HCT116 (cell line): ENCODE measurements at regions of chr10 and their contacts with region 1.

Region 1: DNA sequence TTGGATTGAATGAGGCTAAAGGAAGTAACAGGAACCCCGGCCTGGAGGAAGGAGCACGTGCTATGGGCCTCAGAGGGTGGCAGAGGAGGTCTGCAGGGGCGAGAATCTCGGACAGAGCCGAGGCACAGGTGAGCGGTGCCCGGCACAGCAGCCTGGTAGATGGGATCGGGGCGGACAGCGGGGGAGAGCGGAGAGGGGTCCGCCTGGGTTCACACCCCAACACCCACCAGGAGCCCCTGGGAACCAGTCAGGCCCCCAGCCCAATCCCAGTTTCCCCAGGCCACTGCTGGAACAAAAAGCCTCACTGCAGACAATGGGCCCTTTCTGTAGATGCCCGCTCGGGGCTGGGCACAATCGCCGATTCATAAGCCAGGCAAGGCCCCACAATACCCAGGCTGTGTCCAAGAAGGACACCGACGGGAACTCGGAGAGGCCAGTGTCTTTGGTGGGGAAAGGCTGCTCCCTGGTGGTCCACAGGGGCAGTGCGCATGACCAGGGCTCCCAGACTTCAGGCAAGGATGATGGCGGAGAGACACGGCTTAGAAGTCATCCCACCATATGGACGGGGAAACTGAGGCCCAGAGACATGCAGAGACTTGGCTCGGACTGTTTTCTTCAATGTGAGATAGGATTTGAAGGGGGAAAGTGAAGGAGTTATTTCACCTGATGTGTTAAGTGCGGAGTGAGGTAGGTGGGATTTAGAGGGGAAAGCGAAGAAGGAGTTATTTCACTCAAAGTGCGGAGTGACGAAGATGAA is 106.9 kb upstream of the GPR26 start:
- DNase-seq: peak; percentile 60
- ATAC-seq: peak; percentile 97
- H3K4me3 ChIP-seq: no peak overlapping the region
- H3K27ac ChIP-seq: no peak overlapping the region
- H3K4me1 ChIP-seq: 0 out of 4 replicates have a peak, but pooled peaks cover 0 to 3% of the 10 kb centered on the region in 2 experiments
- H3K27me3 ChIP-seq: no peaks in the 10 kb centered on the region
- CTCF ChIP-seq: peak; percentile 95 to 100 (median 100)
- POLR2A ChIP-seq: no peak
- RAD21 ChIP-seq: peak; percentile 99

Region 2: DNA sequence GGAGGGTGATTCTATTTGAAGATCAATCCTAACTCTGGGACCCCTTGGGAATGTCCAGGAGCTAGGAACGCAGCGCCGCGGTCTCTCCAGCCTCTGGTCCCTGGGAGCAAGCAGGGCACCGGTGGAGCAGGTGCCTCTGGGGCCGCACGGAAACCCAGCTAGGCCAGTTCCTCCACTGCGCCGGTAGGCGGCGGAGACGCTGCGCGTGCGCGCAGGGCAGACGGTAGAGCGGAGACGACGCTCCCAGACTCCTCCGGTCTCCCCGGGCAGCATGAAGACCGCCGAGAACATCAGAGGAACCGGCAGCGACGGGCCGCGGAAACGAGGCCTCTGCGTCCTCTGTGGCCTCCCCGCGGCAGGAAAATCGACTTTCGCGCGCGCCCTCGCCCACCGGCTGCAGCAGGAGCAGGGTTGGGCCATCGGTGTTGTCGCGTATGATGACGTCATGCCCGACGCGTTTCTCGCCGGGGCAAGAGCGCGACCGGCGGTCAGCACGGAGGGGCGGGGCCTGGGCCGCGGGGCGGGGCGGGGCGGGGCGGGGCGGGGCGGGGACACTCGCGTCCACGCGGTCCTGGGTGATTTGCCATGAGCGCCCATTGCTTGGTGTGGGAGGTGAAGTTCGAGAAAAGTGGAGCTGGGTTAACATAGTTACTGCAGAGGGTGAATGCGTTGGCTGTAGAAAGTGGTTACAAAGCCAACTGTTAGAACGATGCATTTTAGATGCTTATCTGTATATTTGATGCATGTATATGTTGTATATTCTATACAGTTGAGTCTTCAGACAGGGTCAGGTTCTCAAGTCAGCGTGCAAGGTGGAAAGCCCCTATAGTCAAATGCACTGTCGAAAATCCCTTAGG is 578.8 kb before region 1 on chr10 and contains the start of gene PSTK:
- CTCF ChIA-PET with region 1: no interaction called
- POLR2A ChIA-PET with region 1: no interaction called
- RAD21 ChIA-PET with region 1: no interaction called
- intact Hi-C with region 1: loop called (anchors 1 kb)
- DNase-seq: peak; percentile 94
- ATAC-seq: peak; percentile 97
- H3K4me3 ChIP-seq: peak within 1 kb of the TSS; percentile 52 to 57
- H3K27ac ChIP-seq: peak within 1 kb of the TSS; percentile 78
- H3K4me1 ChIP-seq: peaks cover 8 to 16% of the 10 kb centered on the region in 2 experiments; a peak in 3 of 4 replicates
- H3K27me3 ChIP-seq: no peaks in the 10 kb centered on the region
- CTCF ChIP-seq: peak in 2 of 3 experiments; percentile 86 to 97; a peak in 4 of 6 replicates
- POLR2A ChIP-seq: peak; percentile 33
- RAD21 ChIP-seq: peak; percentile 35; the same call in 1 of the 2 replicates
- total RNA-seq, gene PSTK: 4.4 TPM

Region 3: GRCh38 chr10:123132576-123133477 is 426.4 kb before region 1 on chr10:
- CTCF ChIA-PET with region 1: interaction called, 3 read pairs
- POLR2A ChIA-PET with region 1: no interaction called
- RAD21 ChIA-PET with region 1: no interaction called
- intact Hi-C with region 1: loop called (anchors 1 kb)
- DNase-seq: peak; percentile 81
- ATAC-seq: peak; percentile 95
- H3K4me3 ChIP-seq: peak overlapping the region; percentile 26 to 43
- H3K27ac ChIP-seq: no peak overlapping the region
- H3K4me1 ChIP-seq: peaks cover 0 to 18% of the 10 kb centered on the region in 2 experiments; a peak in 2 of 4 replicates
- H3K27me3 ChIP-seq: no peaks in the 10 kb centered on the region
- CTCF ChIP-seq: peak; percentile 92 to 99 (median 98)
- POLR2A ChIP-seq: no peak
- RAD21 ChIP-seq: peak; percentile 98

Region 4: DNA sequence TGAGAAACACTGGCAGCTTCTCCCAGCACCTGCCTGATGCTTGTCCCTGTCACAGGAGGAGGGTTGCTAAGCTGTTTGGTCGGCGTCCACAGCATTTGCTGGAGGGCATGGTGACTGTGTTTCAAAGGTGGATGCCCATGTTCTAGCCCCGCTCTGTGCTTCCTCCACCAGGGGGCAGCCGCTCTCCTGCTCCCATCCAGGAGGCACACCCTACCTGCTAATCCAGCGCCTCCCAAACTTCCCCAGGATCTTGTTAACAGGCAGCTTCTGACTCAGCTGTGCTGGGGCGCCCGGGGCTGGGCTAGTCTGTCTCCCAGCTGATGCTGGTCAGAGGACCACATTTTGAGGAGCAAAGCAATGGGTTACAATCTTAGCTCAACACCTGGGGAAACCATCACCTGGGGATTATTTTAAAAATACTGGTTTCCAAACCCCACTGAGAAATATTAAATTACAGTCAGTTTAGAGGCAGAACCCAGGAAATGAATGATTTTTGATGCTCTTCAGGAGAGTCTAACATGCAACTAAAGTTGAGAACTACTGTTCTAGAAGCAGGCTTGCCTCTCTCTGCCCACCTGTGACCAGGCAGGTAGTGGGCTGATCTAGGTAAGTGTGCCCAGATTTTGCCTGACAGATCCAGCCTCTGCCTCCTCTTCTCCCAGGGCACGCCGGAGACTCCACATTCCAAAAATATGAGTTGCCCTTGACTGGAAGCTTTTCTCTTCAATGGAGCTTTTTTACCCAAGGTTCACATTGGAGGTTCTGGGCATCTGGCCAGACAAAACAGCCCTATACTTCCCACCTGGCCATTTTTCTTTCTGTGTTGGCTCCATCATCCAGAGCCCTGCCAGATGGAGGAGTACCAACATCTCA is 14.2 kb after region 1 on chr10:
- CTCF ChIA-PET with region 1: interaction called, 17 read pairs
- POLR2A ChIA-PET with region 1: no interaction called
- RAD21 ChIA-PET with region 1: no interaction called
- intact Hi-C with region 1: no loop called
- DNase-seq: peak; percentile 83
- ATAC-seq: peak; percentile 97
- H3K4me3 ChIP-seq: peak overlapping the region in 1 of 2 experiments; percentile 23; a peak in 2 of 4 replicates
- H3K27ac ChIP-seq: peak overlapping the region; percentile 8; the same call in 1 of the 2 replicates
- H3K4me1 ChIP-seq: peaks cover 11 to 20% of the 10 kb centered on the region in 2 experiments
- H3K27me3 ChIP-seq: peaks cover 19% of the 10 kb centered on the region; the same call in 1 of the 2 replicates
- CTCF ChIP-seq: peak; percentile 89 to 99 (median 98)
- POLR2A ChIP-seq: no peak
- RAD21 ChIP-seq: peak; percentile 83

Region 5: DNA sequence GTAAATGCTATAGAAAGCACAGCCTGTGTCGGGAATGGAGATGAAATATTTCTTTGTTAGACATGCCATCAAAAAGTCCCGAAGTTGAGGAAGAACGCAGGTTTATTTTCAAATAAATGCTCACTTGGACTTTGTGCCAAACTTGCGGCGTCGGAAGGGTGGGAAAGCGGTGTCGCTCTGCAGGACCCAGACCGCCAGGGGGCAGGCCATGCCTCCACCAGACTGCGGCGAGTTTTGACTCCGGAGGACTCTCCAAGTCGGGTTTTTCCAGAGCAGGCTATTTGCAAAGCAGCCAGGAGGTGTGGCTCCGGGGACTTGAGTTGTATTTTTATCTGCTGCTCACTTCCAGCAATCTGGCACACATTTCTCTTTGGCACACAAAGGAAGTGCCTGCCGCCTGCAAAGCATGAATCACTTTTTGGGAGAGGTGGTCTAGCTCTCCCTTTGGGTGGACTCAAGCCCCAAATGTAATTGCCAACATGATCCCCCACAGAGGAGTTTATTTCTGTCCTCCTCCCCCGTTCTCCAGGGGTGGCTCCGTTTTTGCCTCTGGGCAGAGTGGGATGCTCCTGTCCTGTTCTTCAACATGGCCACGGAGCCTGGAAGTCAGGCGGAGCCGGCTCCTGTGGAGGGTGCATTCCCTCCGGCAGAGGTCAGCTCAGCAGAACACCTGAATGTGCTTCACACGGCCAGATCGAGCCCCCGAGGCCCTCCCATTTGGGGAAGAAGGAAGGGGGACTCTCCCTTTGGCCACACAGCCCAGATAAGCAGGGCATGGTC is 24.6 kb after region 1 on chr10:
- CTCF ChIA-PET with region 1: no interaction called
- POLR2A ChIA-PET with region 1: no interaction called
- RAD21 ChIA-PET with region 1: no interaction called
- intact Hi-C with region 1: no loop called
- DNase-seq: peak; percentile 63
- ATAC-seq: peak; percentile 80
- H3K4me3 ChIP-seq: no peak overlapping the region
- H3K27ac ChIP-seq: no peak overlapping the region
- H3K4me1 ChIP-seq: peaks cover 0 to 3% of the 10 kb centered on the region in 2 experiments; a peak in 2 of 4 replicates
- H3K27me3 ChIP-seq: peaks cover 46% of the 10 kb centered on the region
- CTCF ChIP-seq: peak; percentile 91 to 99 (median 97)
- POLR2A ChIP-seq: no peak
- RAD21 ChIP-seq: peak; percentile 92